ENCODE measurements at regions of chr6 and their contacts with region 1.

Region 1: DNA sequence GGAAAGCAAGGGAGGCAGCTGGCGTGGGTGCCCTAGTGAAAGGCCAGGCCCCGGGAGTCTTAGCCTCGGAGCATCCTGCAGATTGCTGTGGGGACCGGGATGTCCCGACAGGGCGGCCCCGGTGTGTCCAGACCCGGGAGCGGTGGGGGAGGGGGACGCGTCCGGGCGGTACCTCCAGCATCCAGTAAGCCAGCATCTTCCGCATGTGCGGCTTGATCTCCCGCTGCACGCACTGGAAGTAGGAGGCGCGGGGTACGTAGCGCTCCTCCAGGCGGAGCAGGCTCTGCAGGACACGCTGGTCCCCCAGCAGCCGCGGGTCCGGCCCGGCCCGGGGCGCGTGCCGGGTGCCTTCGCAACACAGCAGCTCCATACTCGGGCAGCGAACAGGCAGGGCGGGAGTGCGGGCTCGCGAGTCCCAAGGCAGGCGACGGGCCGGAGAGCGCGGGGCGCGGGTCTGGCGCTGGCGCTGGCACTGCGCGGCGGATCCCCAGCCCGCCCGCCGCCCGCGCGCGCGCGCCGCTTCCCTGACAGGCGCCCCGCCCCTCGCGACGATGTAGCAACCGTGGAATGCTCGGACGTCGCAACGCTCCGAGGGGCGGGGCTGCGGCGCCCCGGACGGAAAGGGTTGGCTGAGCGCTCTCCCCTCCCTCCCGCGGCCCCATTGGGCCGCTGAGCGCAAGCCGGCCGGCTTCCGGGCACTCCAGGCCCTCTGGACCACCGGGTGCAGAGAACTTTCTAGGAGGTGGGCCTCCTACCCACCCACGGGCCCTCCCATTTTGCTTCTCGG is at the start of gene CCND3:
- DNase-seq: peak; percentile 81
- ATAC-seq: peak; percentile 62
- H3K4me3 Mint-ChIP-seq: peak within 1 kb of the TSS; percentile 92
- H3K27ac Mint-ChIP-seq: peak within 1 kb of the TSS; percentile 46
- H3K4me1 Mint-ChIP-seq: peaks cover 32% of the 10 kb centered on the region
- H3K27me3 Mint-ChIP-seq: no peaks in the 10 kb centered on the region
- CTCF ChIP-seq: no peak
- total RNA-seq, gene CCND3: 23.0 to 33.6 TPM (median 23.0 TPM) in 3 replicates

Region 2: DNA sequence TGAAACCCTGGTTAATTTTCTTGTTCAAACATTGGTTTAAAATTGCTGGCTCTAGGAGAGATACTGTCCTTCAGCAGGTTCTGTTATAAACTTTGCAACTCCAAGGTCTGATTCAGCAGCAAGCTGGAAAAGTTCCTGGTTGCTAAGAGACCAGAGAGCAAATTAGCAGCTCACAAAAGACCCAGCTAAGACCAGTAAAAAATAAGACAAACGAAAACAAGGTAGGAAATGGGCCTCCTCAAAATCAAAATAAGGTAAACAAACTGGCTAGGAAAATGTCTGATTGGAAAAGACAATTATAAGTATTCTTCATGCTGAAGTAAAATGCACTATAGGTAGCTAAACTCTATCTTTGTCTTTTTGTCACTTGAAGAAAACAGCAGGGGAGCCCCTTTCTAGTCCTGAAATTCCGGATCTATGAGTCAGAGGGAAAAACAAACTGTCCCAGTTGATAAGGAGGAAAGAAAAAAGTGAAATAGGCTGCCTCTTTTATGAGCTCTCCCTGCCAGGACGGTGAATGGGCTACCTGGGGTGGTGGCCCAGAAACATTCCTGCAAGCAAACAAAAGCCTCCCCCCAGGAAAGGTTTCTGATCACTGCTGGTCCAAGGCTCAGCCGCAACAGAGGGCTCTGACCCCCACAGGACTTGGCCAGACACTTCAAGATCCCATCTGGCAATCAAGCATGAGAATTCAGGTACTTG is 944.1 kb before region 1 on chr6:
- CTCF ChIA-PET with region 1: no interaction called
- POLR2A ChIA-PET with region 1: no interaction called
- DNase-seq: peak; percentile 70
- ATAC-seq: peak; percentile 75
- H3K4me3 Mint-ChIP-seq: peak overlapping the region; percentile 35
- H3K27ac Mint-ChIP-seq: peak overlapping the region; percentile 95
- H3K4me1 Mint-ChIP-seq: peaks cover 67% of the 10 kb centered on the region
- H3K27me3 Mint-ChIP-seq: peaks cover 11% of the 10 kb centered on the region; the same call in 1 of the 2 replicates
- CTCF ChIP-seq: no peak

Region 3: GRCh38 chr6:42050266-42051032 is 109.0 kb after region 1 on chr6 and contains the start of gene TAF8:
- CTCF ChIA-PET with region 1: interaction called, 91 read pairs
- POLR2A ChIA-PET with region 1: interaction called, 6 read pairs
- DNase-seq: peak; percentile 88
- ATAC-seq: peak; percentile 81
- H3K4me3 Mint-ChIP-seq: peak within 1 kb of the TSS; percentile 95
- H3K27ac Mint-ChIP-seq: peak within 1 kb of the TSS; percentile 95
- H3K4me1 Mint-ChIP-seq: peaks cover 25% of the 10 kb centered on the region
- H3K27me3 Mint-ChIP-seq: peaks cover 47% of the 10 kb centered on the region
- CTCF ChIP-seq: no peak
- total RNA-seq, gene TAF8: 29.6 to 33.6 TPM (median 31.0 TPM) in 3 replicates

Measured in WTC11 (cell line).